Mammary epithelial cell (primary cell): ENCODE measurements at regions of chr20 and their contacts with region 1.

Region 1: DNA sequence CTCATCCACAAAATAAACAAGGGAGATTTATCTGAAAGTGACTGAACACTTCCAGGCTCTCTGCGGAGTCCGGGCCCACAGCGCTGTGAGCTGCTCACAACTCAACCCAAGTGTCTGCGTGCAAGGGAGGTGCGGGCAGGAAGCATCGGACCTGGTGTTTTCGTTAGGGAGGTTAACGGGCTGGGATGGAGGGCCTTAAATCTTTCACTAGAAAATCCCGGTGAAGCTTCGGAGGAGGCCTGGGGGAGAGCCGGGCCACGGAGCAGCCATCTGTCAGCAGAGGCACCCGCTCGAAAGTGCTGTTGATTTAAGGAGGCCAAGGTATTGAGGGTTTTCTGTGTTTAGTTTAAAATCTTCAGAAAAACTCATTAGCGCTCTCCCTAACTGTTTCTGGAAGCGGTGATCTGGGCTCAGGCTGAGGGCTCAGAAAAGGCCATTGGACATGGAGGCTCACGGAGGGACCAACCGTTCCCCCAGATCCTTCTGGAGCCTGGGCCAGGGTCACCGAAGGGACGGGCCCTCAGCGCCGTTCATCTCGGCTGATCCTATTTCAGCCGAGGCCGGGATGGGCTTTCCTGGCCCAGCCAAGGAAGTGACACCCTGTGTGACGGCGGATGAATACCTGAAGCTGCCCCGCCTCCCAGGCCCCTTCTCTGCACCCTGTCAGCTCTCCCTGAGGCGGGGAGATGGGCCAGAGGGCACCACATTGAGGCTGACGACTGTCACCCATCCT is 20.7 kb downstream of the GATA5 start:
- DNase-seq: no peak
- H3K4me3 ChIP-seq: no peak overlapping the region
- H3K27ac ChIP-seq: no peak overlapping the region
- H3K4me1 ChIP-seq: no peaks in the 10 kb centered on the region
- H3K27me3 ChIP-seq: peaks cover 2% of the 10 kb centered on the region
- CTCF ChIP-seq: no peak

Region 2: DNA sequence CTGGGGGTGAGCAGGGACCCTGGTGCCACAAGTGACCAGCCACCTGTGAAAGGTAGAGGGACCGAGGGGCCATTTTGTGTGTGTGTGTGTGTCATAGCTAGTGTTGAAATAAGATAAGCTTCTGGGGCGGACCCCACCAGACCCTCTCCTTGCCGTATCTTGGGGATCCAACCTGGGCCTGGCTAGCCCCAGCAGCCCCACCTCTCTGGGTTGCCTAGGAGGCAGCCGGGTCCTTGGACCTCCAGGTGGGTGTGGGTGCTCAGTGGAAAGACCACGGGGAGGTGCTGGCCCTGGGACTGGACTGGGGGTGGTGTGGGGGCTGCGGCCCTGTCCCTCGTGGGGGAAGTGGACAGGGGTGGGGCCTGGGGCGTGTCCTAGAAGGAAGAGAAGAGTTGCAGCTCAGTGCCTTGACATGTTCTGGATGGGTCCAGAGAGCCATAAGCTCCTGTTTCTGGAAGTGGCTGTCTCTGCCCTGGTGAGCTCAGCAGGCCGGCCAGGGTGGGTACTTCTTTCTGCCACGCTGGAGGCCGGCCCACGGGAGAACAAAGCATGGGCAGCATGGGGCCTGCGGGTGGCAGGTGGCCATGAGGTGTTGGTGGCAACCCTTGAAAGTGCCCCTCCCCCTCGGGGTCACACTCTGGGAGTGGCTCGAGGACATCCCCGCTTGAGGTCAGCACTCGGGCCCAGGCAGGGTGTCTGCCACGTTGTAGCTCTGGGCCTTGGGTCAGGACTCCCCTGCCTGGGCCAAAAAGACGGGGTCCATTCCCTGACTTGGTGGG is 36.2 kb before region 1 on chr20:
- CTCF ChIA-PET with region 1: no interaction called
- dilution Hi-C with region 1: loop called (anchors 5 kb)
- in situ Hi-C with region 1: no loop called
- intact Hi-C with region 1: no loop called
- DNase-seq: no peak
- H3K4me3 ChIP-seq: no peak overlapping the region
- H3K27ac ChIP-seq: no peak overlapping the region
- H3K4me1 ChIP-seq: no peaks in the 10 kb centered on the region
- H3K27me3 ChIP-seq: peaks cover 2% of the 10 kb centered on the region
- CTCF ChIP-seq: no peak

Region 3: GRCh38 chr20:62476056-62476838 is 21.2 kb after region 1 on chr20:
- CTCF ChIA-PET with region 1: no interaction called
- dilution Hi-C with region 1: no loop called
- in situ Hi-C with region 1: no loop called
- intact Hi-C with region 1: no loop called
- DNase-seq: no peak
- H3K4me3 ChIP-seq: no peak overlapping the region
- H3K27ac ChIP-seq: no peak overlapping the region
- H3K4me1 ChIP-seq: no peaks in the 10 kb centered on the region
- H3K27me3 ChIP-seq: peaks cover 50% of the 10 kb centered on the region
- CTCF ChIP-seq: no peak

Region 4: DNA sequence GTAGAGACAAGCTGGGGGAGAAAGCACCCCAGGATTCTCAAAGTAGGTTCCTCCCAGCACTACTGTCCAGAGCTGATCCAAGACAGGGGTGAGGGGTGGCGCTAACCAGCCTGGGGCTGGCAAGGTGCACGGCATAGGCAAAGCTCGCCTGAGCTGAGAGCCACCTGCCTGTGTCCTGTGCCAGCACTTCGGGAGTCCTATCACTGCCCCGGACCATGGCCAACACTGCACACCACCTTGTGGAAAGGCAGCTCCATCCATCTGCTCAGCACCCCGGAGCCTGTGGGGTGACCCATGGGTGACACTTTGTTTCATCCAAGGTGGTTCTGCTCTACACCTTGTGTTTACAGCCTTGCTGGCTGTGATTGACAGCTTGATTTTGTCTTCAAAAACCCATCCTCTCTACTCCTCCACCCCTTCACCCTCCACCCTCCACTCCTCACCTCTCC is 53.6 kb after region 1 on chr20:
- CTCF ChIA-PET with region 1: no interaction called
- dilution Hi-C with region 1: no loop called
- in situ Hi-C with region 1: no loop called
- intact Hi-C with region 1: no loop called
- DNase-seq: no peak
- H3K4me3 ChIP-seq: no peak overlapping the region
- H3K27ac ChIP-seq: no peak overlapping the region
- H3K4me1 ChIP-seq: no peaks in the 10 kb centered on the region
- H3K27me3 ChIP-seq: no peaks in the 10 kb centered on the region
- CTCF ChIP-seq: no peak

Region 5: GRCh38 chr20:62539198-62540045 is 84.4 kb after region 1 on chr20:
- CTCF ChIA-PET with region 1: no interaction called
- dilution Hi-C with region 1: loop called (anchors 5 kb)
- in situ Hi-C with region 1: no loop called
- intact Hi-C with region 1: no loop called
- DNase-seq: no peak
- H3K4me3 ChIP-seq: no peak overlapping the region
- H3K27ac ChIP-seq: no peak overlapping the region
- H3K4me1 ChIP-seq: no peaks in the 10 kb centered on the region
- H3K27me3 ChIP-seq: peaks cover 15% of the 10 kb centered on the region
- CTCF ChIP-seq: no peak